MCF 10A (cell line): ENCODE measurements at regions of chrX and their contacts with region 1.

Region 1: GRCh38 chrX:119410027-119410823 is 11.1 kb downstream of the SLC25A43 start:
- DNase-seq: peak; percentile 87
- H3K4me3 Mint-ChIP-seq: no peak overlapping the region
- H3K27ac Mint-ChIP-seq: peak overlapping the region; percentile 64
- H3K4me1 Mint-ChIP-seq: peaks cover 17% of the 10 kb centered on the region
- H3K27me3 Mint-ChIP-seq: peaks cover 14% of the 10 kb centered on the region
- CTCF ChIP-seq: no peak

Region 2: GRCh38 chrX:119398974-119399771 is 11.1 kb before region 1 on chrX and contains the start of gene SLC25A43:
- CTCF ChIA-PET with region 1: no interaction called
- POLR2A ChIA-PET with region 1: interaction called, 29 read pairs
- intact Hi-C with region 1: no loop called
- DNase-seq: peak; percentile 31
- H3K4me3 Mint-ChIP-seq: peak within 1 kb of the TSS; percentile 80
- H3K27ac Mint-ChIP-seq: peak within 1 kb of the TSS; percentile 92
- H3K4me1 Mint-ChIP-seq: peaks cover 11% of the 10 kb centered on the region
- H3K27me3 Mint-ChIP-seq: peaks cover 1% of the 10 kb centered on the region
- CTCF ChIP-seq: no peak
- total RNA-seq, gene SLC25A43: 16.0 and 18.4 TPM in 2 replicates

Region 3: DNA sequence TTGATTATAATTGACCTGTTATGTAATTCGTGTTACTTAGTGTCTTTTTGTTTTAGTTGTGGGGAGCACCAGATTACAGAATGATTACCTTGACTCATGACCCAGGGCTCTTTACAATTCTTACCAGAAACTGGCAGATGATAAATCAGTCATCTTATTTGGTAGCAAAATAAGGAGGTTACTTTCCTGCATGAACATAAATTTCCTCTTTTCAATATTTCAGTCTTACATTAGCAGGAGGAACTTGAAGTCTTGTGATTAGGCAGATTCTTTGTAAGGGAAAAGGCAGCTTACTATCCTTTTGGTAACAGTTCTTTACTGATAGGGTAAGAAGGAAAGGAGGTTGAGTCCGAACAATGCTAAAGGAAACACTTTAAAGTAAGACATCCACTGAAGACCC is 32.1 kb after region 1 on chrX:
- CTCF ChIA-PET with region 1: no interaction called
- POLR2A ChIA-PET with region 1: no interaction called
- intact Hi-C with region 1: no loop called
- DNase-seq: no peak
- H3K4me3 Mint-ChIP-seq: no peak overlapping the region
- H3K27ac Mint-ChIP-seq: no peak overlapping the region
- H3K4me1 Mint-ChIP-seq: no peaks in the 10 kb centered on the region
- H3K27me3 Mint-ChIP-seq: peaks cover under 1% of the 10 kb centered on the region
- CTCF ChIP-seq: no peak